Body of pancreas (tissue), 4 donors: ENCODE measurements at regions of chr15 and their contacts with region 1.

Region 1: GRCh38 chr15:65275728-65276126 is 11.0 kb downstream of the PARP16 start:
- DNase-seq: no peak
- ATAC-seq: no peak
- H3K4me3 ChIP-seq: no peak overlapping the region
- H3K27ac ChIP-seq: no peak overlapping the region
- H3K4me1 ChIP-seq: peaks cover 1% of the 10 kb centered on the region
- H3K27me3 ChIP-seq: no peaks in the 10 kb centered on the region
- CTCF ChIP-seq: no peak
- POLR2A ChIP-seq: no peak

Region 2: GRCh38 chr15:65054333-65055200 is 221.2 kb before region 1 on chr15:
- intact Hi-C with region 1: loop called (anchors 10 kb)
- DNase-seq: peak; percentile 76 to 82 (median 78)
- ATAC-seq: peak; percentile 83
- H3K4me3 ChIP-seq: no peak overlapping the region
- H3K27ac ChIP-seq: no peak overlapping the region
- H3K4me1 ChIP-seq: peaks cover 3% of the 10 kb centered on the region
- H3K27me3 ChIP-seq: no peaks in the 10 kb centered on the region
- CTCF ChIP-seq: peak; percentile 74 to 93 (median 85)
- POLR2A ChIP-seq: no peak

Region 3: GRCh38 chr15:65743637-65744252 is 468.0 kb after region 1 on chr15:
- intact Hi-C with region 1: no loop called
- DNase-seq: no peak
- ATAC-seq: no peak
- H3K4me3 ChIP-seq: no peak overlapping the region
- H3K27ac ChIP-seq: no peak overlapping the region
- H3K4me1 ChIP-seq: no peaks in the 10 kb centered on the region
- H3K27me3 ChIP-seq: no peaks in the 10 kb centered on the region
- CTCF ChIP-seq: no peak
- POLR2A ChIP-seq: no peak